Activated CD8-positive, alpha-beta T cell treated with anti-CD3 and anti-CD28 coated beads for 36 hours (primary cell): ENCODE measurements at regions of chr1 and their contacts with region 1.

Region 1: GRCh38 chr1:201895913-201896807 is 7.5 kb downstream of the SHISA4 start:
- DNase-seq: peak; percentile 94
- ATAC-seq: peak; percentile 96
- H3K4me3 Mint-ChIP-seq: peak overlapping the region; percentile 38
- H3K27ac Mint-ChIP-seq: peak overlapping the region; percentile 75
- H3K4me1 Mint-ChIP-seq: peaks cover 7% of the 10 kb centered on the region
- H3K27me3 Mint-ChIP-seq: peaks cover 18% of the 10 kb centered on the region
- CTCF ChIP-seq: peak; percentile 91

Region 2: DNA sequence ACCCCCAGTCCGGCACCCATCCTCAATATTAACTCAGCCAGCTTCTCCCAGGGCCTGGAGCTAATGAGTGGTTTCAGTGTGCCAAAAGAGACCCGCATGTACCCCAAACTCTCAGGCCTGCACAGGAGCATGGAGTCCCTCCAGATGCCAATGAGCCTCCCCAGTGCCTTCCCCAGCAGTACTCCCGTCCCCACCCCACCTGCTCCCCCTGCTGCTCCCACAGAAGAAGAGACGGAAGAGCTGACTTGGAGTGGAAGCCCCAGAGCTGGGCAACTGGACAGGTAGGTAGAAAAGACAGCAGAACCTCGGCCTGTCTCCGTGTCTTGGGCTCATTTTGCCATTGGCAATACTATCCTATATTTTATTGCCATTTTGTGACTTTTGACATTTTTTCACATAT is 112.6 kb before region 1 on chr1:
- CTCF ChIA-PET with region 1: no interaction called
- POLR2A ChIA-PET with region 1: no interaction called
- intact Hi-C with region 1: no loop called
- DNase-seq: no peak
- ATAC-seq: no peak
- H3K4me3 Mint-ChIP-seq: no peak overlapping the region
- H3K27ac Mint-ChIP-seq: no peak overlapping the region
- H3K4me1 Mint-ChIP-seq: no peaks in the 10 kb centered on the region
- H3K27me3 Mint-ChIP-seq: no peaks in the 10 kb centered on the region
- CTCF ChIP-seq: no peak

Region 3: DNA sequence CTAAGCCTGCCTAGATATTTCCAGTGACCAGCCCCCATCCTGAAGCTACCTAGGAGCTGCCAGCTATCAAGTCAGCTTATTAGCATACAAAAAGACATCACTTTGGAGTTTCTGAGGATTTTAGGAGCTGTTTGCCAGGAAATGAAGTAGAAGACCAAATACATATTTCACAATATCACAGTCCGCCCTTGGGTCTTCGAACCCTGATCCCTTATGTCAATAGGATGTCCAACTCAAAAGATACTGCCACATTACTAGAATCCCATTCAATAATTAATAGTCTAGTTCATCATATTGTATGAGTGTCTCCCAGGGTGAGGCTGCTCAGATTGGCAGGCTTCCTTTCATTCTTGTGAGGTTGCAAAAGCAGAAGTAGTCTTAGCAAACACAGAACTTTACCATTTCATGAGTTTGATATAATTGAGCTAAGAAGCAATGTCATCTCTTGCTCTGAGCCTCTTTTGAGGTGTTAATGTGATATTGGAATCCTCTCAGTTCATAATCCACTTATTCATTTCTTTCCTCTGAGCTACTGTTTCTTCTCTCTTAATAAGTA is 53.6 kb before region 1 on chr1:
- CTCF ChIA-PET with region 1: interaction called, 10 read pairs
- POLR2A ChIA-PET with region 1: no interaction called
- intact Hi-C with region 1: no loop called
- DNase-seq: no peak
- ATAC-seq: no peak
- H3K4me3 Mint-ChIP-seq: no peak overlapping the region
- H3K27ac Mint-ChIP-seq: no peak overlapping the region
- H3K4me1 Mint-ChIP-seq: peaks cover 31% of the 10 kb centered on the region
- H3K27me3 Mint-ChIP-seq: no peaks in the 10 kb centered on the region
- CTCF ChIP-seq: no peak

Region 4: DNA sequence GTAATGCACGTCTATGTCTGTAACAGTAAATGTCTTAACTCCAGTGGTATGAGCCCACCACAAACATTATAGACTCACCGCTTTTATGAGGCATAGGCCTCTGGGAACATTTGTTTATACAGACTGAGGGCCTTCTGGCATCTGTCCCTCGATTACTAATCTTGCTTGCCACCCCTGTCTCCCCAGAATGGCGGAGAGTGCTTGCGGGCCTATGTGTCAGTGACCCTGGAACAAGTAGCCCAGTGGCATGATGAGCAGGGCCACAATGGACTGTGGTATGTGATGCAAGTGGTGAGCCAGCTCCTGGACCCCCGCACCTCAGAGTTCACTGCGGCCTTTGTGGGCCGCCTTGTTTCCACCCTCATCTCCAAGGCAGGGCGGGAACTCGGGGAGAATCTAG is 25.8 kb before region 1 on chr1:
- CTCF ChIA-PET with region 1: interaction called, 21 read pairs
- POLR2A ChIA-PET with region 1: no interaction called
- intact Hi-C with region 1: no loop called
- DNase-seq: no peak
- ATAC-seq: no peak
- H3K4me3 Mint-ChIP-seq: no peak overlapping the region
- H3K27ac Mint-ChIP-seq: no peak overlapping the region
- H3K4me1 Mint-ChIP-seq: no peaks in the 10 kb centered on the region
- H3K27me3 Mint-ChIP-seq: no peaks in the 10 kb centered on the region
- CTCF ChIP-seq: no peak

Region 5: DNA sequence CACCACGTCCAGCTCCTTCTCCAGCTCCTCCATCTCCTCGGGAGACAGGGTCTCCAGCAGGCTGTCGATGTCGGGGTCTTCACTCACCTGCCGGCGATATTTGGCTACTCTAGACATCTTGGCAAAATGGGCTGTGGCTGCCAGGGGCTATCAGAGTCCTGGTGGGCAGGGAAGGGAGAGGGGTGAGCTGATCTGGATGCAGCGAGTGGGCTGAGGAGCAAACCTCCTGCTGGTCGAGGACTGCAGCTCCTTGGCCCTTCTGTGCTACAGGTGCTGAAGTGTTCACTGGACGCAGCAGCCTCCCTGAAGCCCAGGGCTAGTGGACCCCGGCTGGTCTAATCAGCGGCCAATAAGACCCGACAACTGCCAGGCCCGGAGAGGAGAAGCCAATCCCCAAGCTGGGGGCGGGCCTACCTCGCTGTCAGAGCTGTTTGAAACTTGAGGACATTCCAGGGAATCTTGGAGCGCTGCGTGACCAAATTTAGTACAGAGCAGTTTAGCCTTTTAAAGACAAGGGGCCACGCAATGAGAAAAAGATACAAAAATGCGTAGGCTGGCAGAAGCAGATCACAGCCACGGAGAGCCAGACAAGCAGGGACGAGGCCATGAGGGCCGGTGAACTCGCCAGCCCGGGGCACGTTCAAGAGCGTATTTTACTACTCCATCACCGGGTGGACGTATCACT is 50.2 kb after region 1 on chr1 and contains the start of gene LMOD1:
- CTCF ChIA-PET with region 1: interaction called, 24 read pairs
- POLR2A ChIA-PET with region 1: interaction called, 3 read pairs
- intact Hi-C with region 1: no loop called
- DNase-seq: peak; percentile 18
- ATAC-seq: peak; percentile 49
- H3K4me3 Mint-ChIP-seq: peak within 1 kb of the TSS; percentile 18
- H3K27ac Mint-ChIP-seq: no peak within 1 kb of the TSS
- H3K4me1 Mint-ChIP-seq: peaks cover 4% of the 10 kb centered on the region
- H3K27me3 Mint-ChIP-seq: peaks cover 49% of the 10 kb centered on the region
- CTCF ChIP-seq: no peak
- total RNA-seq, gene LMOD1: not detected

Region 6: DNA sequence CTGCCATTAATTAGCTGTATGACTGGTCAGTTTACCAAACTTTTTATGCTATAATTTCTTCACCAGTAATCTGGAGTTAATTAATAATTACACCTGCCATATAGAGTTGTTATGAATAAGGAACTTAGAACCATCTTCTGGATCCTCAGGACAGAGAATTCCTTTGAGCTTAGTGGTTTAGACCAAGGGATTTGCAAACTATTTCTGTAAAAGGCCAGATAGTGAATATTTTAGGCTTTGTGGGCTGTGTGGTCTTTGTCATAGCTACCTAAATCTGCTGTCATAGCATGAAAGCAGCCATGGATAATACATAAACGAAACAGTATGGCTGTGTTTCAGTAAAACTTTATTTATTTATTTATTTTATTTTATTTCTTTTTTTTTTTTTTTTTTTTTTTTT is 68.1 kb after region 1 on chr1:
- CTCF ChIA-PET with region 1: interaction called, 40 read pairs
- POLR2A ChIA-PET with region 1: interaction called, 3 read pairs
- intact Hi-C with region 1: no loop called
- DNase-seq: no peak
- ATAC-seq: no peak
- H3K4me3 Mint-ChIP-seq: no peak overlapping the region
- H3K27ac Mint-ChIP-seq: no peak overlapping the region
- H3K4me1 Mint-ChIP-seq: peaks cover 4% of the 10 kb centered on the region
- H3K27me3 Mint-ChIP-seq: no peaks in the 10 kb centered on the region
- CTCF ChIP-seq: no peak

Region 7: DNA sequence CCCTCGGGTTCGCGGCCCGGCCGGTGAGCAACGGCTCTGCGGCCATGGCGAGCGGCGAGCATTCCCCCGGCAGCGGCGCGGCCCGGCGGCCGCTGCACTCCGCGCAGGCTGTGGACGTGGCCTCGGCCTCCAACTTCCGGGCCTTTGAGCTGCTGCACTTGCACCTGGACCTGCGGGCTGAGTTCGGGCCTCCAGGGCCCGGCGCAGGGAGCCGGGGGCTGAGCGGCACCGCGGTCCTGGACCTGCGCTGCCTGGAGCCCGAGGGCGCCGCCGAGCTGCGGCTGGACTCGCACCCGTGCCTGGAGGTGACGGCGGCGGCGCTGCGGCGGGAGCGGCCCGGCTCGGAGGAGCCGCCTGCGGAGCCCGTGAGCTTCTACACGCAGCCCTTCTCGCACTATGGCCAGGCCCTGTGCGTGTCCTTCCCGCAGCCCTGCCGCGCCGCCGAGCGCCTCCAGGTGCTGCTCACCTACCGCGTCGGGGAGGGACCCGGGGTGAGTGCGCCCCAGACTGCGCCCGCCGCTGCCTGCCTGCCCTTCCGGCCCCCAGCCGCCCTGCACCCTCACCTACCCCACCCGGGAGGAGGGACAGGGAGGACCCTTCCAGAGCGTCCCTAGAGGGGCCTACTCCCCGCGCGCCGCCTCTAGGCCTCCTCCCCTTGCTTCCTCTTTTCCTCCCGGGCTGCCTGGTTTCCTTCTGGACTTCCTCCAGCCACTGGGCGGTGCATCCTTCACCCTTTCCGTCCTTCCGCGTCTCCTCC is 86.6 kb after region 1 on chr1 and contains the start of gene RNPEP:
- CTCF ChIA-PET with region 1: interaction called, 31 read pairs
- POLR2A ChIA-PET with region 1: no interaction called
- intact Hi-C with region 1: no loop called
- DNase-seq: peak; percentile 65
- ATAC-seq: peak; percentile 82
- H3K4me3 Mint-ChIP-seq: peak within 1 kb of the TSS; percentile 92
- H3K27ac Mint-ChIP-seq: peak within 1 kb of the TSS; percentile 87
- H3K4me1 Mint-ChIP-seq: peaks cover 22% of the 10 kb centered on the region
- H3K27me3 Mint-ChIP-seq: no peaks in the 10 kb centered on the region
- CTCF ChIP-seq: no peak
- total RNA-seq, gene RNPEP: 37.8 to 39.5 TPM

Region 8: DNA sequence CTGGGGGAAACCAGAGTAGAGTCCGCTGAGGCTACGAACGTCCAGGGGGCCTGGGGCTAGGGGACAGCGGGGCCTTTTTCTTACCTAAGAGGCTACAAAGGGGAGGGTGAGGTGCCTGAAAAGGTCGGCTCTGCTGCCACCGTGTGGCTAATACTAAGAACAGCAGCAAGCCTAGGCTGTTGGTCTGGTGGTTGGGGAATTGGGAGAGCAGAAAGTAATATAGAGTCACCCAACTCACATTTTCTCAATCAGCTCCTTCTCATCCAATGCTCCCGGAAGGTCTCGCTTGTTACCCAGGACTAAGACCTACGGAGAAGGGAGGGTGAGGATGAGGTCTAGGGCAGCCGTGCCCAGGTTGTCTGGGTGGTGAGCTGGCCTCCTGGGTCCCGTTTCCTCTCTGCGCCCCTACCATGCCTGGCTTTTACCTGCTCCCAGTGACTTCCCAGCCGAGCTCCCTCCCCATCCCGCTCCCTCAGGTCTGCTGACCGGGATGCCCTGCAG is 239.1 kb after region 1 on chr1:
- CTCF ChIA-PET with region 1: interaction called, 23 read pairs
- POLR2A ChIA-PET with region 1: no interaction called
- intact Hi-C with region 1: no loop called
- DNase-seq: peak; percentile 60
- ATAC-seq: peak; percentile 96
- H3K4me3 Mint-ChIP-seq: no peak overlapping the region
- H3K27ac Mint-ChIP-seq: no peak overlapping the region
- H3K4me1 Mint-ChIP-seq: no peaks in the 10 kb centered on the region
- H3K27me3 Mint-ChIP-seq: no peaks in the 10 kb centered on the region
- CTCF ChIP-seq: peak; percentile 90

Region 9: DNA sequence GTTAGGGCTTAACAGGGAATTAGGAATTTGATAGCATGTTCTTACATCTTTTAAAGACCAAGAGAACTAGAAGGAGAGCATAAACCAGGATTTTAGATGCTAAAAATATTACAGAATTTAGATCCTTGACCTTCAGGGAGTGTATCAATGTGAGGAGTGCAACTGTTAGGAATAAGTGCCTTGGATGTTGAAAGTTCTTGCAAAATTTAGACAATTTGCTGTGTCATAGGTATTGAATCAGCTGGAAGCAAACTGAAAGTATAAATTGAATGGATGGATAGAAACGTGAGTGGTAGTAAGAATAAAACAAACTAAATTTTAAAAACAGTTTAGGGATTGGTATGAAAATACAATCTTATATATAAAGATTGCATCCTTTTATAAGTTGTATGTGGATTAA is 480.1 kb after region 1 on chr1:
- CTCF ChIA-PET with region 1: no interaction called
- POLR2A ChIA-PET with region 1: no interaction called
- intact Hi-C with region 1: no loop called
- DNase-seq: no peak
- ATAC-seq: no peak
- H3K4me3 Mint-ChIP-seq: no peak overlapping the region
- H3K27ac Mint-ChIP-seq: no peak overlapping the region
- H3K4me1 Mint-ChIP-seq: peaks cover 25% of the 10 kb centered on the region
- H3K27me3 Mint-ChIP-seq: no peaks in the 10 kb centered on the region
- CTCF ChIP-seq: no peak